Activated naive CD4-positive, alpha-beta T cell treated with anti-CD3 and anti-CD28 coated beads for 36 hours (primary cell): ENCODE measurements at regions of chr10 and their contacts with region 1.

Region 1: GRCh38 chr10:114550756-114551635 is 107.1 kb downstream of the ABLIM1 start:
- DNase-seq: no peak
- H3K4me3 Mint-ChIP-seq: no peak overlapping the region
- H3K27ac Mint-ChIP-seq: no peak overlapping the region
- H3K4me1 Mint-ChIP-seq: peaks cover 18% of the 10 kb centered on the region
- H3K27me3 Mint-ChIP-seq: no peaks in the 10 kb centered on the region

Region 2: GRCh38 chr10:114631666-114632417 is 80.8 kb after region 1 on chr10:
- CTCF ChIA-PET with region 1: interaction called, 4 read pairs
- intact Hi-C with region 1: loop called (anchors 5 kb)
- DNase-seq: peak; percentile 28
- H3K4me3 Mint-ChIP-seq: peak overlapping the region; percentile 76
- H3K27ac Mint-ChIP-seq: no peak overlapping the region
- H3K4me1 Mint-ChIP-seq: peaks cover 9% of the 10 kb centered on the region
- H3K27me3 Mint-ChIP-seq: peaks cover 49% of the 10 kb centered on the region

Region 3: DNA sequence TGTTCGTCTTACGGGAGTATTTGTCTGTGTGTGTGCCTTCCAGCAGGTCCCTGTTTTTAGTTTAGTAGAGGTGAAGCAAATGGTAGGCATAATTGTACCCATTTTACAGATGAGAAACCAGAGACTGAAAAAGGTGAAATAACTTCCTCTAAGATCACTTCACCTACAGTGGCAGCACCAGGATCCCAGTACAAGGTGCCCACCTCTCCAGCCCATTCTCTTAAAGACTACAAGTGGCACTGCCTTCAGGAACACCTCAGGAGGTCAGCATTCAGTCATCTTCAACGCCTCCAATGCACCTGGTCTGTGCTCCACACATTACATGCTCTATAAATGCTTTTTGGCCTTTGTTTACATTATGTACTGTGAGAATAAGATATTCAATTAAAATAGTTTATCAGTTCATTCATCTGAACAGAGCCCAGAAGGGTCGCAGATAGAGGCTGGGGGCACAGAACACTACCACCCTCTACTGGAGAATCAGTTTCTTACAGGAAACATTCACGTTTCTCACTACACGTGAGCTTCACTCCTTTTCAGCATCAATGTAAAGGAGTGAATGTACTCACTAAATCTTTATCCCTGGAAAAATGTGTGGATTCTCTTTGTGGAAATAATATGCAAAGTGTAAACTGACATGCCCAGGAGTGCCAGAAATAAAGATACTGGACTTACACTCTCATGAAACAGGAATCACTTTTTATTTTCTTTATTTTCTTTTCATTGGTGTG is 152.5 kb after region 1 on chr10:
- CTCF ChIA-PET with region 1: interaction called, 25 read pairs
- intact Hi-C with region 1: loop called (anchors 1 kb)
- DNase-seq: peak; percentile 11
- H3K4me3 Mint-ChIP-seq: no peak overlapping the region
- H3K27ac Mint-ChIP-seq: no peak overlapping the region
- H3K4me1 Mint-ChIP-seq: no peaks in the 10 kb centered on the region
- H3K27me3 Mint-ChIP-seq: peaks cover 12% of the 10 kb centered on the region

Region 4: DNA sequence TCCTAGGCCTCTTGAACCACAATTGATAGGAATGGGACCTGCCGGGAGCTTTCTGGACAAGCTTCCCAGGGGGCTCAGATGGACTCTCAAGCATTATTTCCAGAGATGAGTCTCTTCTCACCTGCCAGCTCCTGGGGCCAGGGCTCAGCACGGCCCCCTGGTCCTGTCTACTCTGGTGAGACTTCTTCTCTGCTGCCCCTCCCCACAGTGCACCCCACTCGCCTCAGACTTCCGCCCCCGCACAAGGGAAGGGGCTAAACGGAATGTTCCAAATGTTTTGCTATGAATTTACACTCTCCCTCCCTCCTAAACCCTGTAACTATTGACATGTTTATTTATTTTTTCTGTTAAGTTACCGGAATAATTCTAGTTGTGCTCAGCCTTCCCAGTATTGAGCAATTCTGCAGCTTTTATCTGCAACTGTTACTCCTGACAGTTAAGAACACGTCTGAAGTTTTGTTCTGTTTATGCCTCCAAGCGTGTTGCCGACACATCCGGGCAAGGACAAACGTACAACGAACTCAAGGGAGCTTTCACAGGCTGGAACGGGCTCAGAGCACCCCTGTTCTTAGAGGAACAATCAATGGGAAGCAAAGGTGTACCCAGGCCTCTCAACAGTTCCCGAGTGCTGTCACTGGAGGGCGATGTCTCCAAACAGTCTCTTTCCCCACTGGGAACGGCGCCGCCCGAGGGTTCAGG is 325.8 kb after region 1 on chr10:
- CTCF ChIA-PET with region 1: interaction called, 5 read pairs
- intact Hi-C with region 1: loop called (anchors 2 kb)
- DNase-seq: peak; percentile 74
- H3K4me3 Mint-ChIP-seq: no peak overlapping the region
- H3K27ac Mint-ChIP-seq: no peak overlapping the region
- H3K4me1 Mint-ChIP-seq: peaks cover 5% of the 10 kb centered on the region
- H3K27me3 Mint-ChIP-seq: peaks cover 36% of the 10 kb centered on the region

Region 5: GRCh38 chr10:116385994-116386809 is 1835.2 kb after region 1 on chr10:
- CTCF ChIA-PET with region 1: no interaction called
- intact Hi-C with region 1: loop called (anchors 10 kb)
- DNase-seq: no peak
- H3K4me3 Mint-ChIP-seq: no peak overlapping the region
- H3K27ac Mint-ChIP-seq: no peak overlapping the region
- H3K4me1 Mint-ChIP-seq: no peaks in the 10 kb centered on the region
- H3K27me3 Mint-ChIP-seq: no peaks in the 10 kb centered on the region